CD4-positive, alpha-beta T cell (primary cell): ENCODE measurements at regions of chr19 and their contacts with region 1.

Region 1: DNA sequence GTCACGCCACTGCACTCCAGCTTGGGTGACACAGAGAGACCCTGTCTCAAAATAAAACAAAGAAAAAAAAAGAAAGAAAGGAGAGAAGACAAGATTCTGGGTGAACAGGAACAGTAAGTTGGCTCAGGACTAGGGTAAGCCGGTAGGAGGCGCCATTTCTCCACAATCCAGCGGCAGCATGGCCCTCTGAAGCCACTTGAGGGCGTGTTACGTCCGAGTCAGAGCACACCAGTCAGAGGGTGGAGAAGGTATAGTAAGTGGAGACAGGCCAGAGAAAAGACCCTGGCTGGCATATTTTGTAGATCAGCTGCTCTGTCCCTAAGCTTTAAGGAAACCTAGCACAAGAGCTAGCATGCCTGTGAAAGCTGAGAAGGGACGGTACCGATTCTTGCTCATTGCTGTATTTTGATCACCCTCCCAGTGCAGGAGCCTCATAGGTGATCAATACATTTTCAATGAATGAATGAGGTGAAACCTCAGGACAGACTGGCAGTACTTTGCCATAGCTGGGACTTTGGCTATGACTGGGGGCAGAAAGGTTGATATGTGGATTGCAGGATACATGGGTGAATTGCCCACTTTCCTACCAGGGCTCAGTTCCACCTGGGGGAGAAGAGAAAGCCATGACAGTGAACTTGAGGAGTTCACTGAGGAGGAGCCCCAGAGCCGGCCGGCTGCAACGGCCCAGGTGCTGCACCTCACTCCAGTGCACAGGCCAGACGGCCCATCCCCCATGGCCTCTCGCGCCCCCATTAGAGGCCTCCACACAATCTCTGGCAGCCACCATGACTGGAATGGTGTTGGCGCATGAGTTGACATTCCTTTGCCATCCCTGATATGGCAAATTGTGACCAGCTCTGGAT is 23.5 kb downstream of the POU2F2 start:
- DNase-seq: peak; percentile 82 to 96 (median 89)
- ATAC-seq: peak; percentile 100
- H3K4me3 ChIP-seq: no peak overlapping the region
- H3K4me3 Mint-ChIP-seq: no peak overlapping the region
- H3K27ac ChIP-seq: no peak overlapping the region
- H3K27ac Mint-ChIP-seq: peak overlapping the region; percentile 5
- H3K4me1 ChIP-seq: peaks cover 9% of the 10 kb centered on the region
- H3K4me1 Mint-ChIP-seq: peaks cover 10% of the 10 kb centered on the region
- H3K27me3 ChIP-seq: no peaks in the 10 kb centered on the region
- H3K27me3 Mint-ChIP-seq: no peaks in the 10 kb centered on the region
- CTCF ChIP-seq: peak; percentile 100

Region 2: GRCh38 chr19:41515015-41515652 is 593.6 kb before region 1 on chr19:
- CTCF ChIA-PET with region 1: no interaction called
- POLR2A ChIA-PET with region 1: no interaction called
- intact Hi-C with region 1: no loop called
- DNase-seq: no peak
- ATAC-seq: no peak
- H3K4me3 ChIP-seq: no peak overlapping the region
- H3K4me3 Mint-ChIP-seq: no peak overlapping the region
- H3K27ac ChIP-seq: no peak overlapping the region
- H3K27ac Mint-ChIP-seq: no peak overlapping the region
- H3K4me1 ChIP-seq: peaks cover 5% of the 10 kb centered on the region
- H3K4me1 Mint-ChIP-seq: peaks cover 9% of the 10 kb centered on the region
- H3K27me3 ChIP-seq: peaks cover 6 to 10% of the 10 kb centered on the region in 2 experiments
- H3K27me3 Mint-ChIP-seq: peaks cover 81% of the 10 kb centered on the region
- CTCF ChIP-seq: no peak

Region 3: DNA sequence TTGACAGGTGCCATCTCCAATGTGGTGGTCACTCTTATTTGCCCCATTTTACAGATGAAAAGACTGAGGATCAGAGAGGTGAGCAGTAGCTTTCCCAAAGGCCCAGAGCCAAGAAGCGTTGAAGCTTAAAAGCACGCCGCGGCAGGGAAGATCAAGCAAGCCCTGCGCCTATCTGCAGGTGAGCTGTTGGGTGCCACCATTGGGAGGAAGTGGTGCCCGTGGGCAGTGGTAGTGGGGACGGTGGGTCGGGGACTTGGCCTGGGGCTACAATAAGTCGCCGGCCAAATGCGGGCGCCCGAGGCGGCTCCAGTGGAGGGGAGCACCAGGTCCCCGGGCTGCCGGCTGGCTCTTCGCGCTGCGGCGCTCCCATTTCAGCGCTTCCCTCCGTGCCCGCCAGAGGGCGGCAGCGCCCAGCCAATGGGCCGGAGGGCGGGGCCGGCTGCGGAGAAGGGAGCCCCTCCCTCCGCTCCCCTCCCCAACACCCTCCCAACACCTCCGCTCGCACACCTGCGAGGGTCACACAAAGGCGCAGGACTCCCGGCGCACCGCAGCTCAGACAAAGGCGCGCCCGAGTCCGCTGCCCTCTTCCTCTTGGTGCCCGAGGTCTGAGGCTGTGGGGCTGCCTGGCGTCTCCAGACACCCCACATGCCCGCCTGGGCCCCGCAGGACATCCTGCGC is 24.2 kb after region 1 on chr19:
- CTCF ChIA-PET with region 1: interaction called, 15 read pairs
- POLR2A ChIA-PET with region 1: interaction called, 8 read pairs
- intact Hi-C with region 1: loop called (anchors 1 kb)
- DNase-seq: peak; percentile 71 to 92 (median 84)
- ATAC-seq: peak; percentile 72
- H3K4me3 ChIP-seq: peak overlapping the region; percentile 63
- H3K4me3 Mint-ChIP-seq: peak overlapping the region; percentile 89
- H3K27ac ChIP-seq: peak overlapping the region; percentile 71 to 76
- H3K27ac Mint-ChIP-seq: peak overlapping the region; percentile 71
- H3K4me1 ChIP-seq: peaks cover 78% of the 10 kb centered on the region
- H3K4me1 Mint-ChIP-seq: peaks cover 72% of the 10 kb centered on the region
- H3K27me3 ChIP-seq: no peaks in the 10 kb centered on the region
- H3K27me3 Mint-ChIP-seq: no peaks in the 10 kb centered on the region
- CTCF ChIP-seq: peak; percentile 97

Region 4: GRCh38 chr19:42295831-42296525 is 187.2 kb after region 1 on chr19:
- CTCF ChIA-PET with region 1: interaction called, 3 read pairs
- POLR2A ChIA-PET with region 1: no interaction called
- intact Hi-C with region 1: loop called (anchors 1 kb)
- DNase-seq: peak; percentile 85 to 95 (median 88)
- ATAC-seq: peak; percentile 95
- H3K4me3 ChIP-seq: no peak overlapping the region
- H3K4me3 Mint-ChIP-seq: peak overlapping the region; percentile 54
- H3K27ac ChIP-seq: no peak overlapping the region
- H3K27ac Mint-ChIP-seq: peak overlapping the region; percentile 28
- H3K4me1 ChIP-seq: peaks cover 24% of the 10 kb centered on the region
- H3K4me1 Mint-ChIP-seq: peaks cover 15% of the 10 kb centered on the region
- H3K27me3 ChIP-seq: no peaks in the 10 kb centered on the region
- H3K27me3 Mint-ChIP-seq: no peaks in the 10 kb centered on the region
- CTCF ChIP-seq: peak; percentile 98

Region 5: GRCh38 chr19:42401365-42402303 is 292.9 kb after region 1 on chr19:
- CTCF ChIA-PET with region 1: interaction called, 3 read pairs
- POLR2A ChIA-PET with region 1: no interaction called
- intact Hi-C with region 1: loop called (anchors 1 to 10 kb)
- DNase-seq: peak; percentile 63 to 90 (median 70)
- ATAC-seq: peak; percentile 68
- H3K4me3 ChIP-seq: peak overlapping the region; percentile 56
- H3K4me3 Mint-ChIP-seq: peak overlapping the region; percentile 90
- H3K27ac ChIP-seq: peak overlapping the region in 1 of 2 donors; percentile 40
- H3K27ac Mint-ChIP-seq: peak overlapping the region; percentile 75
- H3K4me1 ChIP-seq: peaks cover 37% of the 10 kb centered on the region
- H3K4me1 Mint-ChIP-seq: peaks cover 46% of the 10 kb centered on the region
- H3K27me3 ChIP-seq: no peaks in the 10 kb centered on the region
- H3K27me3 Mint-ChIP-seq: no peaks in the 10 kb centered on the region
- CTCF ChIP-seq: peak; percentile 77

Region 6: DNA sequence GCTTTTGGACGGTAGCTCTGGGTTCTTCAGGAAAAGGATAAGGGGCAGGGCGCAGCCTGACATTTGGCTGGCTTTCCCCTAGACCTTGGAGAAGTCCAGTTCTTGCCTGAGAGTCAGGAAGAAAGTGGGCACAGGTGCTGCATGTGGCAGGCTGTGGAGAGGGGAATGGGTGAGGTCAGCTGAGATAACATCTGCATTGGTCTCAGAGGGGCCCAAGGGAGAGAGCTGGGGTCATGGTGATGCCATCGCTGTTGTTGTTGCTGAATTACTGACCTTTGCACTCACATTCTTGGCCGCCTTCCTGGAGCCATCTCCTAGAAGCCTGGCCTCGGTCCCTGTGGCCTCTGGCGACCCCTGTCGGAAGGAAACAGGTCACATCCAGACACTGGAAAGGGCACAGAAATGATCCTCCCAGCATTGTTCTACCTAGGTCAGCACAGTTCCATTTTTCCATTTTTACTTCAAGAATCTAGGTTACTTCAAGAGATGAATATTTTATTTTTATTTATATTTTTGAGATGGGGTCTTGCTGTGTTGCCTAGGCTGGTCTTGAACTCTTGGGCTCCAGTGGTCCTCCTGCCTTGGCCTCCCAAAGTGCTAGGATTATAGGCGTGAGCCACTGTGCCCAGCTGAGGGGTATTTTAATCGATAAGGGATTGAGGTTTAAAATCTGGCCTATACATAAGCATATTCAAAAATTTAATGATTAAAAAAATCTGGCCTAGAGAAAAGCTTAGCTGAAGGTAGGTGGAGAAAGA is 324.9 kb after region 1 on chr19:
- CTCF ChIA-PET with region 1: no interaction called
- POLR2A ChIA-PET with region 1: no interaction called
- intact Hi-C with region 1: loop called (anchors 1 to 2 kb)
- DNase-seq: peak; percentile 52 to 79 (median 62)
- ATAC-seq: peak; percentile 65
- H3K4me3 ChIP-seq: no peak overlapping the region
- H3K4me3 Mint-ChIP-seq: no peak overlapping the region
- H3K27ac ChIP-seq: no peak overlapping the region
- H3K27ac Mint-ChIP-seq: no peak overlapping the region
- H3K4me1 ChIP-seq: peaks cover 8% of the 10 kb centered on the region
- H3K4me1 Mint-ChIP-seq: peaks cover 6% of the 10 kb centered on the region
- H3K27me3 ChIP-seq: no peaks in the 10 kb centered on the region
- H3K27me3 Mint-ChIP-seq: no peaks in the 10 kb centered on the region
- CTCF ChIP-seq: peak; percentile 78

Region 7: GRCh38 chr19:42529248-42529764 is 420.5 kb after region 1 on chr19:
- CTCF ChIA-PET with region 1: no interaction called
- POLR2A ChIA-PET with region 1: no interaction called
- intact Hi-C with region 1: loop called in 1 of 2 experiments (anchors 5 kb)
- DNase-seq: peak; percentile 49 to 84 (median 62)
- ATAC-seq: peak; percentile 85
- H3K4me3 ChIP-seq: peak overlapping the region; percentile 47
- H3K4me3 Mint-ChIP-seq: peak overlapping the region; percentile 72
- H3K27ac ChIP-seq: peak overlapping the region; percentile 26 to 56
- H3K27ac Mint-ChIP-seq: peak overlapping the region; percentile 63
- H3K4me1 ChIP-seq: peaks cover 46% of the 10 kb centered on the region
- H3K4me1 Mint-ChIP-seq: peaks cover 38% of the 10 kb centered on the region
- H3K27me3 ChIP-seq: no peaks in the 10 kb centered on the region
- H3K27me3 Mint-ChIP-seq: no peaks in the 10 kb centered on the region
- CTCF ChIP-seq: peak; percentile 89